ENCODE measurements at regions of chr15 and their contacts with region 1.

Region 1: GRCh38 chr15:89898614-89899294 is 5.0 kb upstream of the AP3S2 start:
- DNase-seq: no peak
- H3K4me3 ChIP-seq: no peak overlapping the region
- H3K27ac ChIP-seq: no peak overlapping the region
- H3K4me1 ChIP-seq: no peaks in the 10 kb centered on the region
- H3K27me3 ChIP-seq: no peaks in the 10 kb centered on the region
- CTCF ChIP-seq: peak; percentile 26 to 35

Region 2: GRCh38 chr15:90091156-90091931 is 192.6 kb after region 1 on chr15:
- intact Hi-C with region 1: loop called (anchors 5 kb)
- DNase-seq: no peak
- H3K4me3 ChIP-seq: no peak overlapping the region
- H3K27ac ChIP-seq: no peak overlapping the region
- H3K4me1 ChIP-seq: peaks cover 0 to 19% (median 8%) of the 10 kb centered on the region in 4 donors
- H3K27me3 ChIP-seq: no peaks in the 10 kb centered on the region
- CTCF ChIP-seq: no peak

Measured in tibial artery (tissue), 4 donors.